Ovary (tissue), 10 donors: ENCODE measurements at regions of chr11 and their contacts with region 1.

Region 1: DNA sequence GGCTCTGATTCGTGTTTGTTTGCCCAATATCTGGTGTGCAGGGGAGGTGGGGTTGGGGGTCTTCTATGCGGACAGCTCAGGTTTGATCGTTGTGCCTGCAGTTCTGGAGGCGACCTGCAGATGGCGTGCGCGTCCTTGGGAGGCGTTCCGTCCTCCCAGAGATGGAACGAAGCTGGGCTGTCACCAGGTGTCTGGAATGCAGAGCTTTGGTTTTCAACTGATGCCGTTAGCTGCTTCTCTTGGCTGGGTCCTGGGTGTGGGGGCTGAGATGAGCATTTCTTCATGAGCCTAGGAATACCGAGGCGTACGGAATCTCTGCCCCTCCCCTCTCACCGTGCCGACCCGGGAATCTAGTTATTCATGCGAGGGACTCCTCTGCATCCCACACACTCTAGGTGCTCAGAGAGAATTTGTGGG is 98.6 kb downstream of the CEP164 start:
- DNase-seq: peak; percentile 62 to 82 (median 77)
- H3K4me3 ChIP-seq: no peak overlapping the region
- H3K27ac ChIP-seq: no peak overlapping the region
- H3K4me1 ChIP-seq: peaks cover 6% of the 10 kb centered on the region
- H3K27me3 ChIP-seq: no peaks in the 10 kb centered on the region
- CTCF ChIP-seq: peak; percentile 77 to 83 (median 78)
- EP300 ChIP-seq: no peak
- POLR2A ChIP-seq: no peak

Region 2: DNA sequence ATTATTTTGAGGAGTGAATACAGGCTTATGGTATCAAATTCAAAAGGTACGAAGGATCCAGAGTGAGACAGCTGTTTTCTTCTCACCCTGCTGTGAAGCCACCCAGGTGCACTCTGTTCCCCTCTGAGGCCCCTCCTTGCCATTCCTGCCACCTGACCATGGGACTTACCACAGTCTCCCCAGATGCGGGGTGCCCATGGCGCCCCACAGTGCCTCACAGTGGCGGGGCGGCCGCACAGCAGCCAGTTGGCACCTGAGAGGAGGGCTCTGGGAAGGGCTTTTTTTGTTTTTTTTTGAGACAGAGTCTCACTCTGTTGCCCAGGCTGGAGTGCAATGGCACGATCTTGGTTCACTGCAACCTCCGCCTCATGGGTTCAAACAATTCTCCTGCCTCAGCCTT is 53.1 kb after region 1 on chr11:
- intact Hi-C with region 1: no loop called
- DNase-seq: no peak
- H3K4me3 ChIP-seq: no peak overlapping the region
- H3K27ac ChIP-seq: no peak overlapping the region
- H3K4me1 ChIP-seq: no peaks in the 10 kb centered on the region
- H3K27me3 ChIP-seq: no peaks in the 10 kb centered on the region
- CTCF ChIP-seq: no peak
- EP300 ChIP-seq: no peak
- POLR2A ChIP-seq: no peak

Region 3: GRCh38 chr11:117690484-117691217 is 264.4 kb after region 1 on chr11:
- intact Hi-C with region 1: no loop called
- DNase-seq: no peak
- H3K4me3 ChIP-seq: no peak overlapping the region
- H3K27ac ChIP-seq: no peak overlapping the region
- H3K4me1 ChIP-seq: no peaks in the 10 kb centered on the region
- H3K27me3 ChIP-seq: no peaks in the 10 kb centered on the region
- CTCF ChIP-seq: no peak
- EP300 ChIP-seq: no peak
- POLR2A ChIP-seq: no peak

Region 4: GRCh38 chr11:117807482-117808327 is 381.4 kb after region 1 on chr11:
- intact Hi-C with region 1: loop called in 2 of 4 experiments (anchors 5 to 10 kb)
- DNase-seq: peak; percentile 60 to 86 (median 82)
- H3K4me3 ChIP-seq: no peak overlapping the region
- H3K27ac ChIP-seq: no peak overlapping the region
- H3K4me1 ChIP-seq: peaks cover 4% of the 10 kb centered on the region
- H3K27me3 ChIP-seq: no peaks in the 10 kb centered on the region
- CTCF ChIP-seq: peak; percentile 72 to 87 (median 86)
- EP300 ChIP-seq: no peak
- POLR2A ChIP-seq: no peak

Region 5: GRCh38 chr11:117817368-117818040 is 391.2 kb after region 1 on chr11:
- intact Hi-C with region 1: loop called in 2 of 4 experiments (anchors 5 kb)
- DNase-seq: peak; percentile 80 to 91 (median 90)
- H3K4me3 ChIP-seq: no peak overlapping the region
- H3K27ac ChIP-seq: no peak overlapping the region
- H3K4me1 ChIP-seq: peaks cover 3% of the 10 kb centered on the region
- H3K27me3 ChIP-seq: no peaks in the 10 kb centered on the region
- CTCF ChIP-seq: peak; percentile 90 to 98 (median 96)
- EP300 ChIP-seq: no peak
- POLR2A ChIP-seq: no peak